Heart left ventricle (tissue), 16 donors: ENCODE measurements at regions of chr19 and their contacts with region 1.

Region 1: GRCh38 chr19:52897144-52897935 is at the start of gene ZNF320:
- DNase-seq: peak; percentile 97 to 98 (median 98)
- ATAC-seq: peak; percentile 100
- H3K4me3 ChIP-seq: peak within 1 kb of the TSS; percentile 66 to 96 (median 86)
- H3K27ac ChIP-seq: peak within 1 kb of the TSS; percentile 80 to 98 (median 93)
- H3K4me1 ChIP-seq: peaks cover 0 to 20% (median 11%) of the 10 kb centered on the region in 12 donors
- H3K27me3 ChIP-seq: no peaks in the 10 kb centered on the region
- CTCF ChIP-seq: no peak
- POLR2A ChIP-seq: peak in 1 of 2 donors; percentile 81
- total RNA-seq, gene ZNF320: 7.6 to 13.5 (median 9.6) TPM

Region 2: GRCh38 chr19:52922841-52923777 is 25.8 kb after region 1 on chr19 and contains the start of gene ZNF888:
- intact Hi-C with region 1: loop called in 1 of 10 experiments (anchors 2 kb)
- DNase-seq: peak; percentile 81 to 94 (median 88)
- ATAC-seq: peak; percentile 97 to 100 (median 99)
- H3K4me3 ChIP-seq: peak within 1 kb of the TSS; percentile 50 to 90 (median 74)
- H3K27ac ChIP-seq: peak within 1 kb of the TSS; percentile 54 to 91 (median 70)
- H3K4me1 ChIP-seq: peaks cover 0 to 22% (median 10%) of the 10 kb centered on the region in 12 donors
- H3K27me3 ChIP-seq: no peaks in the 10 kb centered on the region
- CTCF ChIP-seq: no peak
- POLR2A ChIP-seq: no peak
- total RNA-seq, gene ZNF888: 0.88 to 3.2 (median 1.3) TPM